MCF 10A (cell line): ENCODE measurements at regions of chr3 and their contacts with region 1.

Region 1: DNA sequence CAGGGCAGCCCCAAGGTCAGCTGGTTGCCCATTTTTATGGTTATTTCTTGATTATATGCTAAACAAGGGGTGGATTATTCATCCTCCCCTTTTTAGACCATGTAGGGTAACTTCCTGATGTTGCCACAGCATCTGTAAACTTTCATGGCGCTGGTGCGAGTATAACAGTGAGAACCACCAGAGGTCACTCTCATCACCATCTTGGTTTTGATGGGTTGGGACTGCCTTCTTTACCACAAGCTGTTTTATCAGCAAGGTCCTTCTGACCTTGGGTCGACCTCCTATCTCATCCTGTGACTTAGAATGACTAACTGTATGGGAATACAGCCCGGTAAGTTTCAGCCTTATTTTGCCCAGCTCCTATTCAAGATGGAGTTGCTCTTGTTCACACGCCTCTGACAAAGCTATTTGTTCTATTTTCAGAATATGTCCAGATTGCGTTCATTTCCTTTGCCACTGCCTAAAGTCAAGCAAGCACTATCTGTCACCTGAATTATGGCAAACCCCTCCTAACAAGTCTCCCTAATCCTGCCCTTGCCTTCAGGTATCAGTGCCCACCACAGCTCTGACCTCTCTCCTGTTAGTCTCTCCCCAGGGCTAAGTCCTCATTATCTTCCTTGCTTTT is 308.4 kb downstream of the ROBO2 start:
- DNase-seq: peak; percentile 42
- H3K4me3 Mint-ChIP-seq: no peak overlapping the region
- H3K27ac Mint-ChIP-seq: peak overlapping the region; percentile 37
- H3K4me1 Mint-ChIP-seq: peaks cover 6% of the 10 kb centered on the region
- H3K27me3 Mint-ChIP-seq: no peaks in the 10 kb centered on the region
- CTCF ChIP-seq: peak; percentile 44

Region 2: GRCh38 chr3:77134769-77135168 is 213.6 kb before region 1 on chr3:
- CTCF ChIA-PET with region 1: no interaction called
- POLR2A ChIA-PET with region 1: no interaction called
- intact Hi-C with region 1: no loop called
- DNase-seq: no peak
- H3K4me3 Mint-ChIP-seq: no peak overlapping the region
- H3K27ac Mint-ChIP-seq: no peak overlapping the region
- H3K4me1 Mint-ChIP-seq: no peaks in the 10 kb centered on the region
- H3K27me3 Mint-ChIP-seq: peaks cover 70% of the 10 kb centered on the region
- CTCF ChIP-seq: no peak

Region 3: DNA sequence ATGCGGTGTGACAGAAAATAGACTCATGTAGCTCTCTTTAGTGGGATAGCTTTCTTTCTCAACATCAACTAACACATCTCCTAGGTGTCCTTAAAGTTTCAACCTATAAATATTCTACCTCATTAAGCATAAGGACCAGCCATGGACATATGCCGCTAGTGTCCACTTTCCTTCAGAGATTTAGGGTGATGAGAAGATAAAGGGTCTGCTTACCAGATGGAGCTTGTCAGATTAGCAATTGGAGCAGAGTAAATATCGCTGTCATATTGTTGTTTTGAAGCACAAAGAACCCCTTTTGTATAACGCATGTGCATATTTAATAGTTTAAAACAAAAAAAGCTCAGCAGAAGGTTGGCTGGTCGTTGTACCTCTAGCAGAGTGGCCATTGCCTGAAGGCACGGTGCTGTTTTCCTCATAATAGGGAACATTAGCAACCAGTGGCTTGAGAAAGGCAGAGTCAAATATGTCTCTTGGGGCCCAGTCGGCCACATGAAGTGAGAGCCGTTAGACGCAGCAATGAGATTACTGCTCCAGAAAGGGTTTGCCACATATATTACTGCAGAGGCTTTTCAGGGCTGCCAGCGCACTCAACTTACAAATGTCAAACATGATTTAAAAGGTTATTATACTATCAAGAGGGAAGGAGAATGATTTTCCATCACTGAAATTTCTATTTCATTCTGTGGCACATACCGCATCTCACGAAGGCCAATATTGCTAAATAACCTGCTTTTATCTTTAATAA is 44.2 kb before region 1 on chr3:
- CTCF ChIA-PET with region 1: no interaction called
- POLR2A ChIA-PET with region 1: no interaction called
- intact Hi-C with region 1: no loop called
- DNase-seq: no peak
- H3K4me3 Mint-ChIP-seq: no peak overlapping the region
- H3K27ac Mint-ChIP-seq: no peak overlapping the region
- H3K4me1 Mint-ChIP-seq: no peaks in the 10 kb centered on the region
- H3K27me3 Mint-ChIP-seq: no peaks in the 10 kb centered on the region
- CTCF ChIP-seq: no peak

Region 4: DNA sequence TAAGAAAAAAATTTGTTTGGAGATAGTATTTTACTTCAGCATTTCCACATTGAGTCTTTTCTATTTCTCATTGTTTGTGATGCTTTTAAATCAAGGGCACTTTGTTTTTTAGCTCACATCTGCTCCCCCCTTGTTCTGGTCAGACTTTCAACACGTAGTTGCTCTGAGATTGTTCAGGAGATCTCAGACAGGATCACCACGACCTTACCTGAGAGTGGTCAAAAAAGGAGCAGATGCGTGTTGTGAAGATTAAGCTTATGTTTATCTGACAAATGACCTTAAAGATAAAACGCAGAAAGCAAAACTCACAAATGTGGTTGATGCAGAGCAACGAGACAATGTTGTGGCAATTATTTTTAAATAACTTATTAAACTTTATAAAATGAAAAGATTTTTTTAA is 10.1 kb before region 1 on chr3:
- CTCF ChIA-PET with region 1: interaction called, 16 read pairs
- POLR2A ChIA-PET with region 1: no interaction called
- intact Hi-C with region 1: no loop called
- DNase-seq: no peak
- H3K4me3 Mint-ChIP-seq: no peak overlapping the region
- H3K27ac Mint-ChIP-seq: no peak overlapping the region
- H3K4me1 Mint-ChIP-seq: no peaks in the 10 kb centered on the region
- H3K27me3 Mint-ChIP-seq: no peaks in the 10 kb centered on the region
- CTCF ChIP-seq: no peak

Region 5: GRCh38 chr3:77815467-77815866 is 467.1 kb after region 1 on chr3:
- CTCF ChIA-PET with region 1: interaction called, 3 read pairs
- POLR2A ChIA-PET with region 1: no interaction called
- intact Hi-C with region 1: loop called (anchors 10 kb)
- DNase-seq: peak; percentile 45
- H3K4me3 Mint-ChIP-seq: no peak overlapping the region
- H3K27ac Mint-ChIP-seq: no peak overlapping the region
- H3K4me1 Mint-ChIP-seq: no peaks in the 10 kb centered on the region
- H3K27me3 Mint-ChIP-seq: no peaks in the 10 kb centered on the region
- CTCF ChIP-seq: peak; percentile 12

Region 6: GRCh38 chr3:78165876-78166275 is 817.5 kb after region 1 on chr3:
- CTCF ChIA-PET with region 1: interaction called, 3 read pairs
- POLR2A ChIA-PET with region 1: no interaction called
- intact Hi-C with region 1: loop called (anchors 10 kb)
- DNase-seq: no peak
- H3K4me3 Mint-ChIP-seq: no peak overlapping the region
- H3K27ac Mint-ChIP-seq: no peak overlapping the region
- H3K4me1 Mint-ChIP-seq: no peaks in the 10 kb centered on the region
- H3K27me3 Mint-ChIP-seq: no peaks in the 10 kb centered on the region
- CTCF ChIP-seq: peak; percentile 11

Region 7: GRCh38 chr3:78204977-78205376 is 856.6 kb after region 1 on chr3:
- CTCF ChIA-PET with region 1: interaction called, 5 read pairs
- POLR2A ChIA-PET with region 1: no interaction called
- intact Hi-C with region 1: loop called (anchors 1 kb)
- DNase-seq: peak; percentile 48
- H3K4me3 Mint-ChIP-seq: peak overlapping the region; percentile 31
- H3K27ac Mint-ChIP-seq: no peak overlapping the region
- H3K4me1 Mint-ChIP-seq: peaks cover 6% of the 10 kb centered on the region
- H3K27me3 Mint-ChIP-seq: no peaks in the 10 kb centered on the region
- CTCF ChIP-seq: peak; percentile 22